HEK293 (cell line): ENCODE measurements at regions of chr6 and their contacts with region 1.

Region 1: GRCh38 chr6:45930420-45931040 is 85.1 kb downstream of the CLIC5 start:
- H3K4me3 ChIP-seq: no peak overlapping the region
- H3K27ac ChIP-seq: no peak overlapping the region
- H3K4me1 ChIP-seq: peaks cover 7% of the 10 kb centered on the region; the same call in 1 of the 2 replicates
- CTCF ChIP-seq: peak; percentile 80

Region 2: GRCh38 chr6:45946352-45946751 is 15.8 kb after region 1 on chr6:
- CTCF ChIA-PET with region 1: interaction called, 13 read pairs
- POLR2A ChIA-PET with region 1: no interaction called
- H3K4me3 ChIP-seq: no peak overlapping the region
- H3K27ac ChIP-seq: no peak overlapping the region
- H3K4me1 ChIP-seq: no peaks in the 10 kb centered on the region
- CTCF ChIP-seq: no peak

Region 3: GRCh38 chr6:45965792-45966191 is 35.3 kb after region 1 on chr6:
- CTCF ChIA-PET with region 1: interaction called, 14 read pairs
- POLR2A ChIA-PET with region 1: no interaction called
- H3K4me3 ChIP-seq: no peak overlapping the region
- H3K27ac ChIP-seq: no peak overlapping the region
- H3K4me1 ChIP-seq: no peaks in the 10 kb centered on the region
- CTCF ChIP-seq: no peak

Region 4: DNA sequence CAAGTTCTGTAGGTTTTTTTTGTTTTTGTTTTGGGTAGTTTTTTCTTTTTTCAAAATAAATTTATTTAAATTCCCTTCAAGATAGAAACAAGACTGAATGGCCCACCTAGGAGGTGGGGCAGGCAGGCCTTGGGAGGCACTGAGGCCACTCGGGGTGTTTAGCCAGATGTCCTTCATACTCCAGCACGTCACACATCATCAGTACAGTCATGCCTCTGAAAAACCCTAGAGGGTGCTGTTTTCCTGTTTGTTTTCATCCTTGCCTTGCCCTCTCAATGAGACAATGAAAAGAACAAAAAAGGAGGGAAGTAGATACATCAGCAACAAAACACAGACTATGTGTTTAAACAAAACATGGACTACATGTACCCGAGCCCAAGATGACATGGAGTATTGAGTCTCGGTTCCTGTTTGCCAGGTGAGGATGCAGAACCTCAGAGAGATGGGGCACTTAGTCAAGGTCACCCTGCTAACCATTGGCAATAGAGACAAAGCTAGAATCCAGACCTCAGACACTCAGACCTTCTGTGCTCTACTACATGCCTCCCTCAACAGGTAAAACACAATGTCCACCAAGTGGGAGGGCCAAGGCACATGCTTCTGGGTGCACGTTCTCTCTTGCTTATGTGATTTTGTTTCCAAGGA is 111.9 kb after region 1 on chr6:
- CTCF ChIA-PET with region 1: interaction called, 11 read pairs
- POLR2A ChIA-PET with region 1: no interaction called
- H3K4me3 ChIP-seq: no peak overlapping the region
- H3K27ac ChIP-seq: no peak overlapping the region
- H3K4me1 ChIP-seq: peaks cover 7% of the 10 kb centered on the region
- CTCF ChIP-seq: peak; percentile 63

Region 5: GRCh38 chr6:46456297-46456696 is 525.8 kb after region 1 on chr6:
- CTCF ChIA-PET with region 1: no interaction called
- POLR2A ChIA-PET with region 1: no interaction called
- H3K4me3 ChIP-seq: no peak overlapping the region
- H3K27ac ChIP-seq: no peak overlapping the region
- H3K4me1 ChIP-seq: peaks cover 30% of the 10 kb centered on the region
- CTCF ChIP-seq: no peak